Activated T-helper 2 cell treated with anti-CD3 and anti-CD28 coated beads, Interferon-gamma antibody, Interleukin-2, Interleukin-4, amounts not matched to agents 10 μg/mL and 5 μg/mL and 100 μg/mL, durations not matched to agents 14 hours and 24 hours and 36 hours (primary cell): ENCODE measurements at regions of chr19 and their contacts with region 1.

Region 1: DNA sequence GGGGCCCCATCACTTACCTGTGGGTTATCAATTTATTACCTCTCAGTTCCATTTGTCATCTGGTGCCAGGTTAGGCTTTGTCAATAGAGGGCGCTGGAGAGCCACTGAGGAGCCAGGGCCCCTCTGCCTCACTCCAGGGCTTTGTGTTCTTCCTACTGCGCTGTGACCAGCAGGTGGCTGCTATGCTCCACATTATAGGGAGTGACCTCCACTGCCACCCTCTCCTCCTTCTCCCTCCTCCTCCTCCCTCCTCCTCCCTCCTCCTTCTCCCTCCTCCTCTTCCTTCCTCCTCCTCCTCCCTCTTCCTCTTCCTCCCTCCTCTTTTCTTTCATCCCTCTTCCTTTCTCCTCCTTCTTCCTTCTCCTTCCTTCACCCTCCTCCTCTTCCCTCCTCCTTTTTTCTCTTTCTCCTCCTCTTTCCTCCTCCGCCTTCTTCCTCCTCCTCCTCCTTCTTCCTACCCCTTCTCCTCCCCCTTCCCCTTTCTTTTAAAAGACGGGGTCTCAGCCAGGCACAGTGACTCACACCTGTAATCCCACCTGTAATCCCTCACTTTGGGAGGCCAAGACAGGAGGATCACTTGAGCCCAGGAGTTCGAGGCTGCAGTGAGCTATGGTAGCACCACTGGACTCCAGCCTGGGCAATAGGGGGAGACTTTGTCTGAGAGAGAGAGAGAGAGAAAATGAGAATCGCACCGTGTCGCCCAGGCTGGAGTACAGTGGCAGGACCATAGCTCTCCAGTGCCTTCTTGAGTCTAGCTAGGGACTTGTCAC is 10.3 kb upstream of the ZBTB32 start:
- DNase-seq: peak; percentile 85
- H3K4me3 Mint-ChIP-seq: no peak overlapping the region
- H3K27ac Mint-ChIP-seq: peak overlapping the region; percentile 35
- H3K4me1 Mint-ChIP-seq: peaks cover 13% of the 10 kb centered on the region
- H3K27me3 Mint-ChIP-seq: no peaks in the 10 kb centered on the region

Region 2: GRCh38 chr19:35557539-35558399 is 136.2 kb before region 1 on chr19:
- intact Hi-C with region 1: loop called (anchors 10 kb)
- DNase-seq: peak; percentile 31
- H3K4me3 Mint-ChIP-seq: peak overlapping the region; percentile 73
- H3K27ac Mint-ChIP-seq: no peak overlapping the region
- H3K4me1 Mint-ChIP-seq: peaks cover 2% of the 10 kb centered on the region
- H3K27me3 Mint-ChIP-seq: peaks cover 34% of the 10 kb centered on the region

Region 3: GRCh38 chr19:35822579-35822978 is 128.6 kb after region 1 on chr19:
- intact Hi-C with region 1: loop called (anchors 1 kb)
- DNase-seq: no peak
- H3K4me3 Mint-ChIP-seq: no peak overlapping the region
- H3K27ac Mint-ChIP-seq: no peak overlapping the region
- H3K4me1 Mint-ChIP-seq: peaks cover 4% of the 10 kb centered on the region
- H3K27me3 Mint-ChIP-seq: peaks cover 5% of the 10 kb centered on the region

Region 4: DNA sequence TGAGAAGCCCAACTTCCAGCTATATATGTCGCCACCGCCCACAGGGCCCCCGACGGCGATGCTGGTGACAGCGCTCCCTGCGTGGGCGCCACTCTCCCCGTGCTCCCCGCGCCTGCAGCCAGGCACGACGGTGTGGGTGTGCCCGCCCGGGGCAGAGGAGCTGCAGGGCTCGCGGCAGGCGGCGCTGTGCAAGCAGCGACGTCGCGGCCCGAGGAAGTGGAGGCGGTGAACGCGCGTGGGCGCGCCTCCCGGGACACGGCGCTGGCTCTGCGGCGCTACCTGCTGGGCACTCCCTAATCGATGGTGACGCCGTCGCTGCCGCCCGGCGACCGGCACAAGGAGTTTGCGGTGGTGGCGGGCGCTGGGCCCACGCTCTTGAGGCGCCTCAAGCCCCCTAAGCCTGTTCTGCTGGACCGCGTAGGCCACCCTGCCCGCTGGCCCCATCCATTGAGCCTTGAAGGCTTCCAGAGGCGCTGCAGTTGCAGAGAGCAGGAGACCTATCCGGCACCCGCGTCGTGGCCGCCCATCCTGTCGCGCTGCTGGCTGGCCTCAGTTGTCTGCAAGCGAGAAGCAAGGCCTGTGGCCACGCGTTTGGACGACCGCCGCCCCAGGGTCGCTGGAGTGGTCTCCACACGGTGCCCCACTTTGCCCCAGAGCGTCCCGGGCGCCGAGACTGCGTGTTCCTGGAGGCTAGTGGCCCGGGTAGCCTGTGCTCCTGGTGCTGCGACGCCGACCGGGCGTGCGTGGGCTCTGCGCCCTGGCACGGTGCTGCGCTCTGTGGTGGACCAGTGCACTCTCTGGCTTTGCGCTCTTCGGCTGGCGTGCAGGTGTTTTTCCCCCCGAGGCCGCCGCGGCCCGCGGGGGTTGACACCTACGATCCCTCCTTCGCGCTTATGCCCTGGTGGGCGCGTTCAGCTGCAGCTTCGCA is 265.3 kb after region 1 on chr19:
- intact Hi-C with region 1: no loop called
- DNase-seq: peak; percentile 64
- H3K4me3 Mint-ChIP-seq: no peak overlapping the region
- H3K27ac Mint-ChIP-seq: no peak overlapping the region
- H3K4me1 Mint-ChIP-seq: peaks cover 8% of the 10 kb centered on the region
- H3K27me3 Mint-ChIP-seq: peaks cover 22% of the 10 kb centered on the region